Activated CD4-positive, alpha-beta memory T cell treated with anti-CD3 and anti-CD28 coated beads for 36 hours (primary cell): ENCODE measurements at regions of chr10 and their contacts with region 1.

Region 1: DNA sequence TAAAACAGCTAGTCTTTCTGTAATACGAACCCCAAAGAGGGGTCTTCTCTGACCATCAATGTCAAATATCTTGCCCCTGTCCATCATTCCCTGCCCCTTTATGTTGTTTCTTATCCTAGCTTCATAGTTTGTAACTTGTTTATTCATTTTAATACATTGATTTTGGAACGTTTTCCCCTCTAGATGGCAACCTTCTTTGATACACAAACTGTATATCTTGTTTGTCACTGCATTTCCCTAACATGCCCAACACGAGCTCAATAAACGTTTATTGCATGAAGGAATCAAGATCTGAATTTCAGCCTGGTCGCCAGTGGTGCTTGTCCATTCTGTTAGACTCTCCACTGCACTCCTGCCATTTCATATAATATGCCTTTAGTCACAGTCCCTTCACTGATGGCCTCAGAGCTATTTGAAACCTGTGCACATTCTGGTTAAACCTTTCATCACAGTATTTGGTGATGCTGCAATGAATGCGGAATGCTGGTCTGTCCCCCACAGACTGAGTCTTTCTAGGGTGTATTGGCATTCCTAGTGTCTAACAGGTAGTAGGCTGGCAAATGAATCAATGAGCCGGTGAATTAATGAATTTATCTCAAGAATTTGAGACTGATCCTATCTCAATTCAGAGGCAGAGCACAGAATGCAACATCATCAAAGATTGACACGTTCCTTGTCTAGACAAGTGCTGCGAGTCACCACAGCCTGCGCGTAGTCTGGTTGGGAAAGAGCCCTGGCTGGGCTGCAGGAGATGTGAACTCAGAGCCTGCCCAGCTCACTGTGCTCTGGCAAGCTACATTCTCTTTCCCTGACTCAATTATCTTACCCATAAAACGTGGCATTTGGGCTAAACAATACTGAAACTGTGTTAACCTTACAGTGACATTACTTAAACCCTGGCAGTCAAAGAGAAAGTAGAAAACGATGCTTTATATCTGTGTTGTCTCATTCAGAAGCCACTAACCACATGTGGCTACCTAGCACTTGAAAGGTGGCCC is 55.2 kb upstream of the FRMD4A start:
- DNase-seq: peak; percentile 73
- H3K4me3 Mint-ChIP-seq: no peak overlapping the region
- H3K27ac Mint-ChIP-seq: no peak overlapping the region
- H3K4me1 Mint-ChIP-seq: peaks cover 62% of the 10 kb centered on the region
- H3K27me3 Mint-ChIP-seq: peaks cover 27% of the 10 kb centered on the region

Region 2: GRCh38 chr10:13787015-13787421 is 598.9 kb before region 1 on chr10:
- CTCF ChIA-PET with region 1: no interaction called
- POLR2A ChIA-PET with region 1: no interaction called
- intact Hi-C with region 1: loop called (anchors 2 kb)
- DNase-seq: peak; percentile 89
- H3K4me3 Mint-ChIP-seq: no peak overlapping the region
- H3K27ac Mint-ChIP-seq: peak overlapping the region; percentile 82
- H3K4me1 Mint-ChIP-seq: peaks cover 31% of the 10 kb centered on the region
- H3K27me3 Mint-ChIP-seq: no peaks in the 10 kb centered on the region

Region 3: DNA sequence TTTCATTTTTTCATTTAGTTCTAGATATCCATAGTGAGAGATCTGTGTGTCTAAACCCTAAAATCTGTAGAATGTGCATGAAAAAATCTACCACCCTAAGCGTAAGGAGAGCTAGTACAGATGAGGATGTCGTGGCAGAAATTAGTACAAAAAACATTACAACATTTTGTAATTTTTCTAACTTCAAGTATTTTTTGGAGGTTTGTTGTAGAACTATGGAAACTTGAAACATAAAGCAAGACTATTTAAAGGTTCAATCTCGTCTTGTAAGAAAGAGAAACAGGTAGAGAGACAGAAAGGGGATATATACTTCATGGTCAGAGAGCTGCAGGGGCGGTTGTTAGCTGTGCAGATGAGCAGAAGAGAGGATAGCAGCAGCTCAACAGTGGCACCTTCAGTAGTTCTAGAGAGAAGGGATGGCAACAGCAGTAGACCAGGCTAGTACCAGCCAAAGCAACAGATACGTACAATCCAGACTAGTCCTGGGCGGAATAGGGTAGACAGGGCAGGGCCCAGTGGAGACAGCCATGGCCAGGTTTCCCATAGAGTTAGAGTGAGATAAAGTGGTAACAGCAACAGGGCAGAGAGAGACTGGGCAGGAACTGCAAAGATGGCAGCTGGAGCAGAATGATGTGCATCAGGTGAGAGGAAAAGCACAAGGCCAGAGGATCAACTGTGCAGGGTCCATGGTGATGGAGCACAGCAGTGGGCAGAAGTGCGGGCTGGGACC is 200.4 kb before region 1 on chr10:
- CTCF ChIA-PET with region 1: no interaction called
- POLR2A ChIA-PET with region 1: interaction called, 4 read pairs
- intact Hi-C with region 1: loop called (anchors 1 kb)
- DNase-seq: peak; percentile 77
- H3K4me3 Mint-ChIP-seq: peak overlapping the region; percentile 74
- H3K27ac Mint-ChIP-seq: peak overlapping the region; percentile 98
- H3K4me1 Mint-ChIP-seq: peaks cover 32% of the 10 kb centered on the region
- H3K27me3 Mint-ChIP-seq: peaks cover 31% of the 10 kb centered on the region

Region 4: GRCh38 chr10:14259696-14260566 is 126.0 kb before region 1 on chr10:
- CTCF ChIA-PET with region 1: no interaction called
- POLR2A ChIA-PET with region 1: no interaction called
- intact Hi-C with region 1: no loop called
- DNase-seq: no peak
- H3K4me3 Mint-ChIP-seq: no peak overlapping the region
- H3K27ac Mint-ChIP-seq: no peak overlapping the region
- H3K4me1 Mint-ChIP-seq: no peaks in the 10 kb centered on the region
- H3K27me3 Mint-ChIP-seq: peaks cover 18% of the 10 kb centered on the region

Region 5: DNA sequence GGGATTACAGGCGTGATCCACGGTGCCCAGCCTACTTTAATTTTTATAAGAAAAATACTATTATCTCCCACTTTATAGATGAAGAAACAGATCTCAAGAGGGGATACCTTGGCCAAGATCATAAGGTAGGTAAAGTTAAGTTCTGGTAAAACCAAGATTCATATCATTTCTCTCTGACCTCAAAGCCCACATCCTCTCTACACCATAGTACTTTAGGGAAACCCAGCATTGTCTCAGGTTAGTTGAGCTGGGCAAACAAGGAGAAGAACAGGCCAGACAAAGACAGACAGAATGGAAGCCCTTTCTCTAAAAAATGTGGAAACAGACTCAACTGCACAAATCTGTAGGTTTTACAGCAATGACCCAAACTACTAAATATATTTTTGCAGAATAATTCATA is 142.6 kb after region 1 on chr10:
- CTCF ChIA-PET with region 1: no interaction called
- POLR2A ChIA-PET with region 1: no interaction called
- intact Hi-C with region 1: loop called (anchors 2 kb)
- DNase-seq: no peak
- H3K4me3 Mint-ChIP-seq: peak overlapping the region; percentile 50
- H3K27ac Mint-ChIP-seq: peak overlapping the region; percentile 80
- H3K4me1 Mint-ChIP-seq: peaks cover 89% of the 10 kb centered on the region
- H3K27me3 Mint-ChIP-seq: no peaks in the 10 kb centered on the region

Region 6: DNA sequence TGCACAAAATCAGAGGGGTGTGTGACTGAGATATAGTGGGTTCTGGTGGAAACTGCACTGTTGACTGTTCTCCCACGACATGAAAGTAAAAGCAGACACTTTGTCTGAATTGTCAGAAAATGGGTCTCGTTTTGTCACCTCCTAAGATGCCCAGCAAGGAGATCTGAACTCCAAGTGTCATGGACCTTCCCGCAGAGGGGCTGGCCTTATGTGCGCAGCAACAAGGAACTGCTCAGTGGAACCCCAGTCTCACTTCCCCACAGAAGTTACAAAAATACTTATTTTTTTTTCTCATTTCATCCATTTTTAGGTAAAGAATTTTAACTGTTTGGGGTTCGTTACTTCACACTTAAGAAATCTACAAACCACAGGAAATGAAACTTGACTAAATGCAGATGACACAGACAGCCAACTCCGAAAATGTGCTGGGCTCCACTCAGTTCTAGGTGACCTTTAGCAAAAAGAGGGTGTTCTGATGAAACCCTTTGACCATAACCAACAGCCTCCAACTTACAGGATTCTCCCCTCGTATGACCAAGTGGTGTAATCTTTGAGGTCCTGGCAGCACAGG is 273.8 kb after region 1 on chr10:
- CTCF ChIA-PET with region 1: no interaction called
- POLR2A ChIA-PET with region 1: no interaction called
- intact Hi-C with region 1: loop called (anchors 1 kb)
- DNase-seq: peak; percentile 72
- H3K4me3 Mint-ChIP-seq: peak overlapping the region; percentile 45
- H3K27ac Mint-ChIP-seq: peak overlapping the region; percentile 92
- H3K4me1 Mint-ChIP-seq: peaks cover 77% of the 10 kb centered on the region
- H3K27me3 Mint-ChIP-seq: no peaks in the 10 kb centered on the region

Region 7: GRCh38 chr10:14878266-14879054 is 492.6 kb after region 1 on chr10 and contains the start of gene SUV39H2:
- CTCF ChIA-PET with region 1: no interaction called
- POLR2A ChIA-PET with region 1: no interaction called
- intact Hi-C with region 1: loop called (anchors 5 kb)
- DNase-seq: peak; percentile 96
- H3K4me3 Mint-ChIP-seq: peak within 1 kb of the TSS; percentile 94
- H3K27ac Mint-ChIP-seq: peak within 1 kb of the TSS; percentile 80
- H3K4me1 Mint-ChIP-seq: peaks cover 41% of the 10 kb centered on the region
- H3K27me3 Mint-ChIP-seq: no peaks in the 10 kb centered on the region
- total RNA-seq, gene SUV39H2: 38.7 to 39.8 TPM